ENCODE measurements at regions of chr7 and their contacts with region 1.

Region 1: DNA sequence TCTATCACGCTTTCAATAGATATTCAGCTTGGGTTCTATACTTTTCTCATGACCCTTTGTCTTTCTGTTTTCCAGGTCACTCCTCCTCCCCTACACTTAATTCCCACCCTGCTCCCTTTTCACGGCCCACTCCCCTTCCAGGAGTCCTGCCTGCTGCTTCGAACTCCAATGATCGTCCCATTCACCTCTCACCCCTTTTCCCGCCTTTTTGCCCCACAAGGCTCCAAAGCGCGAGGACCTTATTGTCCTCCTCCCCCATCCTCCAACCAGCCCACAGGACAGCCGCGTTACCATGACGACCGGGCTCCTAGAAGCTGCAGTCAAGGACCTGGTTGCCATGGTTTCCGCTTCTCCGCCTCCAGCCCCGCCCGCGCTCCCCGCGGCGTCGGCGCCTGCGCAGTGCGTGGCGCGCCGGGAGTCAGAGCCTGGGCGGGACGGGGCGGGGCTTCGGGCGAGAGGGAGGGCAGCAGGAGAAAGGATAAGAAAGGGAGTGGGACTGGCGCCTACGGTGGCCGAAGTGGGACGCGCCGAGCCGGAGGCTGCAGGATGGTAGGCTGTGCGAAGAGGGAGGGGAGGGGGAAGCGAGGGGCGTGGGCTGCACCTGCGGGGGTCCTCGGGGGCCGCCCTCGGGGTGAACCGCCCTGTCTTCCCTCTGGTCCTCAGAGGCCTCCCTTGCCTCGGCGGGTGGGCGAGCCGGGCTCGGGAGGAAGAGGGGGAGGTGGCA is at the start of gene AP1S1:
- DNase-seq: peak; percentile 95 to 98 (median 96)
- ATAC-seq: peak; percentile 98 to 99 (median 98)
- H3K4me3 ChIP-seq: peak within 1 kb of the TSS; percentile 63 to 95 (median 74)
- H3K27ac ChIP-seq: no peak within 1 kb of the TSS
- H3K4me1 ChIP-seq: no peaks in the 10 kb centered on the region
- H3K27me3 ChIP-seq: no peaks in the 10 kb centered on the region
- CTCF ChIP-seq: no peak
- total RNA-seq, gene AP1S1: 12.0 to 23.1 (median 15.6) TPM

Region 2: GRCh38 chr7:101278461-101279292 is 124.5 kb after region 1 on chr7:
- intact Hi-C with region 1: loop called in 2 of 3 experiments (anchors 5 to 10 kb)
- DNase-seq: peak in 1 of 6 donors; percentile 10
- ATAC-seq: no peak
- H3K4me3 ChIP-seq: no peak overlapping the region
- H3K27ac ChIP-seq: no peak overlapping the region
- H3K4me1 ChIP-seq: no peaks in the 10 kb centered on the region
- H3K27me3 ChIP-seq: no peaks in the 10 kb centered on the region
- CTCF ChIP-seq: no peak